Right cardiac atrium (tissue), 5 donors: ENCODE measurements at regions of chr3 and their contacts with region 1.

Region 1: DNA sequence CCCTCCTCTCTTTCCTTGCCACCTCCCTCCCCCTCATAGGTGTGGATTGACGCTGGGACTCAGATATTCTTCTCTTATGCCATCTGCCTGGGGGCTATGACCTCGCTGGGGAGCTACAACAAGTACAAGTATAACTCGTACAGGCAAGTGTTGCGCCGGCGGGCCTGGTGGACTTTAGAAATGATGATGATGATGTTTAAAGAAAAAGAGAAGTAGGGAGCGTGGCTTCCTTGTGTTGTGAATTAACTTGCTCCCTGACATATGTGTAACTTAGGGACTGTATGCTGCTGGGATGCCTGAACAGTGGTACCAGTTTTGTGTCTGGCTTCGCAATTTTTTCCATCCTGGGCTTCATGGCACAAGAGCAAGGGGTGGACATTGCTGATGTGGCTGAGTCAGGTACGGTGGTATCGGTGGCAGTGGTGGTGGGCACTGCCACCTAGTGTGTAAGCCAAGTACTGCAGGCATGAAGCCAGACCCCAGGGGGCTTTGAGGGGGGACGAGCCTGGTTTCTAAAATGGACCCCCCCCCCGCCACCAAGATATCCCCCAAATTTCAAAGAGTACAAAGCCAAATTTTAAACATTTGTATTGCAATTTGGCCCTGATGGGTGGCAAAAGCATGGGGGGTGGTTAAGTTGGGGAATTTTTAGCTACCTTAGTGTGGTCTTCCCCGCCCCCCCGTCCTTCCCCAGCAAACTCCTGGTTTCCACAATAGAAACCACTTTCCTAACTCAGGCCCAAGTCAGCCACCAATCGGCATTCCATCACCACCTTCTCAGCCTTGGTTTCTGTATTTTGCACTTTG is 65.6 kb downstream of the SLC6A6 start:
- DNase-seq: no peak
- ATAC-seq: peak; percentile 44 to 51
- H3K4me3 ChIP-seq: no peak overlapping the region
- H3K27ac ChIP-seq: no peak overlapping the region
- H3K4me1 ChIP-seq: no peaks in the 10 kb centered on the region
- H3K27me3 ChIP-seq: no peaks in the 10 kb centered on the region

Region 2: DNA sequence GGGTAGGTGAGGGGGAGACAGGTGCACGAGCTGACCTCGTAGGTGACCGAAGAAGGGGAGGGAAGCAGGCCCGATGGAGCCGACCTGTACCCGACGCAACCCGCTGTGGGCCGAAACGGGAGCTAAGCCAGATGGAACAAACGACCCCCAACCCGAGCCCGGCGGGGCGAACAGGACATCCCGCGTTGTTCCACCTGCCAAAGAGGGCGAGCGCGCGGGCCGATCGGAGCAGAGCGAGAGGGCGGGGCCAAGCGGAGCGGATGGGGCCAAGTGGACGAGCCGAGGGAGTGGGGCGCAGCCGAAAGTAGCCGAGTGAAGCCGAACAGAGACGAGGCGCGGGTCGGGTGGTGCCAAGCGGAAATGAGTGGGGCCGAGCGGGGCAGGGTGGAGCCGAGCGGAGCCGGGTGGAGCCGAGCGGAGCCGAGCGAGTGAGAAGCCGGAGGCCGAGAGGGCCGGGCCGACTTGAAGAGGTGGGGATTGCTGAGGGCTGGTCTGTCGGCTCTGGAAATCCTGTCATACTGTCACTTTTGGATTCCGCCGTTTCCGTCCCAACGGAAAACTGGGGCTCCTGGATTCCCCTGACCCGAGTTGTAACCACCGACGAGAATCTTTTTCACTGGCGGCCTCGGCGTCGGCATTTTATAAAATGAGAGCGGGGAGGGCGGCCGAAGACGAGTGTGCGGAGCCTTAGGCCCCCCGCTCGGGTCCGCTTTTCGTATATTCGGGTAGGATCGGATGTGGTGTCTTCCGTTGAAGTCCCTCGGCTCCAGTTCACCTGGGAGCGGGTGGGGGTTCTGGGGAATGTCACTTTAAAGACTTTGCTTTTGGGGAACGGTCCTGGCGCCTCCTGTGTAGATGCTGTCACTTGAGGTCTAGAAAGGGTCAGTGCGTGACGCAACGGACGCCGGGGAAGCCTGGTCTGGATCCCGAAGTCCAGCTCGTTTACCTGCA is 572.6 kb before region 1 on chr3:
- intact Hi-C with region 1: loop called in 1 of 4 experiments (anchors 10 kb)
- DNase-seq: peak; percentile 96 to 99 (median 98)
- ATAC-seq: peak; percentile 98 to 99
- H3K4me3 ChIP-seq: peak overlapping the region; percentile 71
- H3K27ac ChIP-seq: peak overlapping the region; percentile 5
- H3K4me1 ChIP-seq: peaks cover 3% of the 10 kb centered on the region
- H3K27me3 ChIP-seq: no peaks in the 10 kb centered on the region

Region 3: GRCh38 chr3:14203521-14204079 is 264.4 kb before region 1 on chr3:
- intact Hi-C with region 1: loop called (anchors 2 to 5 kb)
- DNase-seq: peak; percentile 62 to 70 (median 69)
- ATAC-seq: peak; percentile 74 to 77
- H3K4me3 ChIP-seq: no peak overlapping the region
- H3K27ac ChIP-seq: peak overlapping the region; percentile 86
- H3K4me1 ChIP-seq: peaks cover 12% of the 10 kb centered on the region
- H3K27me3 ChIP-seq: no peaks in the 10 kb centered on the region

Region 4: DNA sequence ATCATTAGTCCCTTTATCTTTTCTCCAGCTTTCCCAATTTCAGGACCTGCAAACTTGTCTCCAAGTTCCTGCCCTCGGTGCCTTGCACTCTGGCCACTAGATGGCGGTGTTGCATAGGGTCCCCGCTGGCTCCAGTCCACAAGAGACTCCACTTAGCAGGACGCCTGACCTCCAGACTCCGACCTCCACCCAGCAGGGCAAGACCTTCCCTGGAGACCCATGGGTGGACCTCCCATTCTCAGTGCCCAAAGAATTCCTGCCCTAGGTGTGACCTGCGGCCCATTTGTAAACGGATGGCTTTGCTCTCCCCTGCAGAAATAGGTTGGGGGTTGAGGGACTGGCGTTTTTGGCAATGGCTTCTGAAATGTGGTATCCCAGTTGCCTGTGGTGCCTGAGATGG is 206.8 kb before region 1 on chr3:
- intact Hi-C with region 1: loop called (anchors 2 to 5 kb)
- DNase-seq: peak; percentile 80 to 92 (median 92)
- ATAC-seq: peak; percentile 83 to 88
- H3K4me3 ChIP-seq: no peak overlapping the region
- H3K27ac ChIP-seq: no peak overlapping the region
- H3K4me1 ChIP-seq: no peaks in the 10 kb centered on the region
- H3K27me3 ChIP-seq: no peaks in the 10 kb centered on the region

Region 5: DNA sequence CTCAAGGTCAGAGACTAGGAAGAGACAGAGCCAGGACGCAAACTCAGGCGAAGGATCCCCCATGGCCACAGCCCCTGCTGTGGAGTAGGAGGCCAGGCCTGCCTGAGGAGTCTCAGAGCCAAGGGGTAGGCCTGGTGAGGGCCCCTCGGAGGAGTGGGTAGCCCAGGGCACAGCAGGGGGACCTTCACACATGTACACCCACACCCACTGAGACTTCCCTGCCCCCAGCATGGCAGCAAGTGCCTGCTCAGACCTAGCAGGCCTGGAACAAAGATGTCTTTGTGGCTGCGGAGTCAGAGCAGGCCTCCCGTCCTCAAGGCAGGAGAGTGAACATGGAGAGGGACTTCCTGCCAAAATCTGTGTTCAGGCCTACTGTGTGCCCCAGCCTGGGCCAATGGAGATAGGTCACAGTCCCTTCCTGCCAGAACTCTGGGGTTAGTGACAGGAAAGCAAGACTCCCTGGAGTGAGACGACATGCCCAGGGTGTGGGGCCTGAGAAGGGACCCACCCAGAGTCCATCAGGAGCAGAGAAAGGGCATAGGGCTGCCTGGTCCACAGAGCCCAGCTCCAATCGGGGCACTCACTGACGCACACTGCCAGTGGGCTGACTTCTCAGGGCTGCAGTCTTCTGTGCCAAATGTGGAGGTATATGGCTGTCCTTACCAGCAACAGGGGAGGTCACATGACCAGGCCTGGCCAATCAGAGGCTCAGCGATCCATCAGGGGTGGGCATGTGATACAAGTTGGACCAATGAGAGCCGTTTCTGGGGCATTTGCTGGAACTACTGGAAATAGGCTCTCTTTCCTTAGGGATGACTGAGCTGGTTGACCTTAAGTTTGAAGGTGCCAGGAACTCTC is 69.8 kb after region 1 on chr3:
- intact Hi-C with region 1: no loop called
- DNase-seq: peak in 1 of 3 donors; percentile 38
- ATAC-seq: no peak
- H3K4me3 ChIP-seq: no peak overlapping the region
- H3K27ac ChIP-seq: no peak overlapping the region
- H3K4me1 ChIP-seq: peaks cover 10% of the 10 kb centered on the region
- H3K27me3 ChIP-seq: no peaks in the 10 kb centered on the region

Region 6: GRCh38 chr3:15476378-15476777 is 1008.4 kb after region 1 on chr3:
- intact Hi-C with region 1: no loop called
- DNase-seq: no peak
- ATAC-seq: no peak
- H3K4me3 ChIP-seq: no peak overlapping the region
- H3K27ac ChIP-seq: no peak overlapping the region
- H3K4me1 ChIP-seq: peaks cover 7% of the 10 kb centered on the region
- H3K27me3 ChIP-seq: no peaks in the 10 kb centered on the region